Psoas muscle (tissue), 8 donors: ENCODE measurements at regions of chr4 and their contacts with region 1.

Region 1: DNA sequence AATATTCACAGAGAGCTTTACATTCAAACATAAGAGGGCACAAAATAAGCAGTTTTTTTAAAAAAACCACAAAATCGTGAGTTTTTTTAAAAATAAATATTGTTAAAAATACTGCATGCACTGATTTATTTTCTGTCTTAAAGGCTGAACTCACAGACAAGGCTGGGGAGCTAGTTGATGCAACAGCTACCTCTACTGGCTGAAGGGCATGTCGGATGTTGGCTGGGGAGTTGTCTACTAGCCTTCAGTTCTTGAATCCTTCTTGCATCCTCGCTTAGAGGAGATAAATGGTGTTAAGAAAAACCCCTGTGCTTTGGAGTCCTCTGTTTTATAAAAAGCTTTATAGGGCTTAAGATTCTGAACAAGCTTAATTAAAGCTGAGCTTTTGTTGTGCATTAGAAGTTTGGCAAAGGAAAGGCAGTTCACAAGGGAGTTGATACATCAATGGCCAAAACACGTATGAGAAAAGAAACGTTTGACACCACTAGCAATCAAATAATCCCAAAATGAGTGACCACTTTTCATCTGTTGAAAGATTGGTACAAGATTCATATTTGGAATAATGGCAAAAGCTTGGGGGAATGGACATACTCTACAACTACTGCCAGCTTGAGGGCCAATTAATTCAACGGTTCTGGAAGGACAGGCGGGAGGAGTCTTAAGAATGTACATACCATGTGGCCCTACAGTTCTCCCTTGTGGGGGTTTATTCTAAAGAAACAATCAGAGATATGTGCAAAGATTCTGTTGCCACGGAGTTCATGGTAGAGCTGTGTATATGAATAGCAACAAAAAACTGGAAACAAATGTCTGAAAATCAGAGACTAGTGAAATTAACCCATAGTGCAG is 94.7 kb downstream of the SEL1L3 start:
- DNase-seq: peak in 1 of 2 donors; percentile 22
- ATAC-seq: peak; percentile 60 to 86 (median 74)
- H3K4me3 ChIP-seq: no peak overlapping the region
- H3K27ac ChIP-seq: no peak overlapping the region
- H3K4me1 ChIP-seq: no peaks in the 10 kb centered on the region
- H3K27me3 ChIP-seq: no peaks in the 10 kb centered on the region
- CTCF ChIP-seq: peak; percentile 70

Region 2: GRCh38 chr4:25439918-25440477 is 328.1 kb before region 1 on chr4:
- intact Hi-C with region 1: loop called in 1 of 2 experiments (anchors 2 kb)
- DNase-seq: no peak
- ATAC-seq: peak in 3 of 4 donors; percentile 60 to 69 (median 61)
- H3K4me3 ChIP-seq: no peak overlapping the region
- H3K27ac ChIP-seq: no peak overlapping the region
- H3K4me1 ChIP-seq: no peaks in the 10 kb centered on the region
- H3K27me3 ChIP-seq: no peaks in the 10 kb centered on the region
- CTCF ChIP-seq: peak; percentile 61